ENCODE measurements at regions of chr5 and their contacts with region 1.

Region 1: GRCh38 chr5:34474573-34475021 is 181.5 kb upstream of the RAI14 start:
- DNase-seq: peak; percentile 68 to 72 (median 70)
- ATAC-seq: peak; percentile 93
- H3K4me3 ChIP-seq: no peak overlapping the region
- H3K27ac ChIP-seq: no peak overlapping the region
- H3K4me1 ChIP-seq: no peaks in the 10 kb centered on the region
- H3K27me3 ChIP-seq: peaks cover 14 to 28% of the 10 kb centered on the region in 2 experiments; a peak in 4 of 5 replicates
- CTCF ChIP-seq: peak; percentile 84 to 95 (median 87)
- EP300 ChIP-seq: no peak
- POLR2A ChIP-seq: no peak
- RAD21 ChIP-seq: peak; percentile 91 to 94

Region 2: GRCh38 chr5:34538026-34538672 is 63.6 kb after region 1 on chr5:
- CTCF ChIA-PET with region 1: interaction called, 6 read pairs
- POLR2A ChIA-PET with region 1: no interaction called
- in situ Hi-C with region 1: no loop called
- intact Hi-C with region 1: loop called (anchors 5 kb)
- DNase-seq: peak; percentile 48 to 73 (median 55)
- ATAC-seq: peak; percentile 97
- H3K4me3 ChIP-seq: no peak overlapping the region
- H3K27ac ChIP-seq: no peak overlapping the region
- H3K4me1 ChIP-seq: peaks cover 0 to 3% of the 10 kb centered on the region in 2 experiments; a peak in 1 of 5 replicates
- H3K27me3 ChIP-seq: no peaks in the 10 kb centered on the region
- CTCF ChIP-seq: peak; percentile 71 to 83 (median 81)
- EP300 ChIP-seq: no peak
- POLR2A ChIP-seq: no peak
- RAD21 ChIP-seq: peak; percentile 64 to 78

Region 3: DNA sequence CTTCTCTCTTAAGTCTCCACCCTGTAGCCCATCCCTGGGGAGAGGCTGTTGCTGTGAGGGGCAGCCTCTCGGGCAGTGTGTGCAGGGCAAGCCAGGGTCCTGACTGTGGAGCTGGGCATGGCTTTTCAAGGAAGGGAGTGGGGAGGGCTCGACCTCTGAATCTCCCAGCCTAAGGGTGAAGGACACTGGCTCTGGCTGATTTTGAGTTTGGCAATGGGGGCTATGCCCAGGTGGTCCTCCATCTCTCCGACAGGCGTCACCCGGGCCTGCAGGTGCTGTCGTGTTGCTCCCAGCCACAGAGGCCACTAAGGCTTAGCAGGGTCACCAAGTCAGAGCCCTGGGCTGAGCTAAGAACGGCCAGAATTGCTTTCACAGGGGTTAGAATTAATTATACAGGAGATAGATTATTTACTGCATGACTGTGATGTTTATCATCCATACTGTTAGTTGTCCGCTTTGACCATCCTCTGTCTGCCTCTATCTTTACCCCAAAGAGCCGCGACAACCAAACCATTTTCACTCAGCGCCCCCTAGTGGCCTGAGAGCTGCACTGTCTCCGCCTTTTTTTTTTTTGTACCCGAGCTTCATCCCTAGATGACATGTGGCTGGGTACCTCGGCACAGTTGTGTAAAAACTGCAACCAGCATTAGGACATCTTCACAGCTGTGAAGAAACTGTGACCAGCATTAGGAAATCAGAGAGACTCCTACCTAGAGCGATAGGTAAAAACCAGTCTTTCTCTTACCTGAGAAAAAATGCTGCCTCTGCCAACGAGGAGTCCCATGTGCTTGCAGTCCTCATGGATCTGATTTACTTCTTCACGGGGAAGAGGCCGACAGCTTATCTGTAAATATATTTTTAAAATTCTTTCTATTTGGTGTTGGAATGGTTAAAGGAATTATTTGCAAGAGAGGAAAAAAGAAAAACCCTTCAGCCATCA is 528.7 kb after region 1 on chr5:
- CTCF ChIA-PET with region 1: interaction called, 11 read pairs
- POLR2A ChIA-PET with region 1: no interaction called
- in situ Hi-C with region 1: loop called (anchors 10 kb)
- intact Hi-C with region 1: loop called (anchors 1 kb)
- DNase-seq: peak; percentile 78 to 82 (median 82)
- ATAC-seq: peak; percentile 96
- H3K4me3 ChIP-seq: no peak overlapping the region
- H3K27ac ChIP-seq: no peak overlapping the region
- H3K4me1 ChIP-seq: no peaks in the 10 kb centered on the region; a peak in 1 of 5 replicates
- H3K27me3 ChIP-seq: peaks cover 5 to 16% of the 10 kb centered on the region in 2 experiments; a peak in 3 of 5 replicates
- CTCF ChIP-seq: peak; percentile 85 to 96 (median 96)
- EP300 ChIP-seq: no peak
- POLR2A ChIP-seq: no peak
- RAD21 ChIP-seq: peak; percentile 66 to 77

Region 4: DNA sequence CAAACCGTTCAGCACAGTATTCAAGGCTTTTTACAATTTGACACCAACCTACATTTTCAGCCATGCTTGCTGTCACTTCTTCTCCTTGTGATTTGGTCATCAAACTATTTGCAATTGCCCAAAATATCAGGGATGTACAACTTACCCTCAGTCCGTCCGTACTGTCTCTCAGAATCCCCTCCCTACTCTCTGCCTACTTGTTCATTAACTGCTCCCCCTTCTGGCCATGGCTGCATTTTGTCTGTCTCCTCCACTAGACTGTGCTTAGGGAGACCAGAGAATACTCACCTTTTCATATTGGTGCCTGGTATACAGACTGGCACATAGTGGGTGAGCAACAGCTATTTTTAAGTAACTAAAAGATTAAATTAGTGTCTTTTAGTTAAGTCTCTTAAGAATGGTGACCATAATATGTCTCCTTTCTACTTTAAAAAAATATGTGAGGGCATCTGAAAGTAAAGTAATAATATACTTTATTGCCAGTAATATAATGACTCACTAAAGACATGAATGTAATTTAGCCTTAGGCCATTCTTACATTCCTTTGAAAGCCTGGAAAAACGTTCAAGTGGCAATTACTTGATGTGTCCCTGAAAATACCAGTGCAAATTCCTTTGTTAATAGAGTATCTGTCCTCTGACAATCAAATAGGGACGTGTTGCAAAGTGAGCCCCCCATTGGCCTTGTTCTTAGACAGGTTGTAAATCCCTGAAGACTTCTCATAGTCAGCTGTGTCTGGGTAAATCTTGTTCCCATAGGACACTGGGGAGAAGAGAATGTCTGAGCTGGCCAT is 727.9 kb after region 1 on chr5:
- CTCF ChIA-PET with region 1: no interaction called
- POLR2A ChIA-PET with region 1: no interaction called
- in situ Hi-C with region 1: loop called (anchors 25 kb)
- intact Hi-C with region 1: loop called (anchors 1 kb)
- DNase-seq: peak; percentile 31 to 61 (median 43)
- ATAC-seq: peak; percentile 95
- H3K4me3 ChIP-seq: no peak overlapping the region
- H3K27ac ChIP-seq: no peak overlapping the region
- H3K4me1 ChIP-seq: no peaks in the 10 kb centered on the region
- H3K27me3 ChIP-seq: peaks cover 0 to 10% of the 10 kb centered on the region in 2 experiments; a peak in 2 of 5 replicates
- CTCF ChIP-seq: peak; percentile 50 to 60 (median 56); a peak in 5 of 6 replicates
- EP300 ChIP-seq: no peak
- POLR2A ChIP-seq: no peak
- RAD21 ChIP-seq: peak in 1 of 2 experiments; percentile 46; a peak in 2 of 4 replicates